Stomach (tissue), 19 donors: ENCODE measurements at regions of chr1 and their contacts with region 1.

Region 1: GRCh38 chr1:211680752-211681327 is 5.4 kb upstream of the NEK2 start:
- DNase-seq: peak; percentile 70 to 94
- H3K4me3 ChIP-seq: no peak overlapping the region
- H3K27ac ChIP-seq: no peak overlapping the region
- H3K4me1 ChIP-seq: peaks cover 0 to 9% (median 3%) of the 10 kb centered on the region in 4 donors
- H3K27me3 ChIP-seq: peaks cover 0 to 1% (median 0%) of the 10 kb centered on the region in 3 donors
- CTCF ChIP-seq: peak in 5 of 7 experiments; percentile 57 to 87 (median 65)
- EP300 ChIP-seq: no peak
- POLR2A ChIP-seq: no peak

Region 2: GRCh38 chr1:211830330-211831142 is 149.7 kb after region 1 on chr1 and contains the start of gene LPGAT1:
- intact Hi-C with region 1: loop called (anchors 5 kb)
- DNase-seq: peak; percentile 82 to 94
- H3K4me3 ChIP-seq: peak within 1 kb of the TSS; percentile 75 to 92 (median 87)
- H3K27ac ChIP-seq: peak within 1 kb of the TSS; percentile 86 to 93 (median 89)
- H3K4me1 ChIP-seq: peaks cover 0 to 59% (median 30%) of the 10 kb centered on the region in 4 donors
- H3K27me3 ChIP-seq: no peaks in the 10 kb centered on the region
- CTCF ChIP-seq: peak in 3 of 7 experiments; percentile 51 to 79 (median 66)
- EP300 ChIP-seq: no peak
- POLR2A ChIP-seq: no peak
- total RNA-seq, gene LPGAT1: 2.9 to 59.3 (median 14.8) TPM

Region 3: DNA sequence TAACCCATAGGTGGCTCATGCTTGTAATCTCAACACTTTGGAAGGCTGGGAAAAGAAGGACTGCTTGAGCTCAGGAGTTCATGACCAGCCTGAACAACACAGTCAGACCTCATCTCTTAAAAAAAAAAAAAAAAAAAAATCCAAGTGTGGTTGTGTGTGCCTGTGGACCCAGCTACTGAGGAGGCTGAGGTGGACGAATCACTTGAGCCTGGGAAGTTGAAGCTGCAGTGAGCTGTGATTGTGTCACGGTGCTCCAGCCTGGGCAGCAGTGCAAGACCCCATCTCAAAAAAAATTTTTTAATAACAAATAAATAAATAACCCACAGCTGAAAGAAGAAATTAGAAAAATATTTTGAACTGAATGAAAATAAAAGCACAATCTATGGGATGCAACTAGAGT is 340.7 kb after region 1 on chr1:
- intact Hi-C with region 1: loop called (anchors 10 kb)
- DNase-seq: no peak
- H3K4me3 ChIP-seq: no peak overlapping the region
- H3K27ac ChIP-seq: no peak overlapping the region
- H3K4me1 ChIP-seq: peaks cover 0 to under 1% (median 0%) of the 10 kb centered on the region in 4 donors
- H3K27me3 ChIP-seq: no peaks in the 10 kb centered on the region
- CTCF ChIP-seq: no peak
- EP300 ChIP-seq: no peak
- POLR2A ChIP-seq: no peak